HEK293 (cell line): ENCODE measurements at regions of chr6 and their contacts with region 1.

Region 1: GRCh38 chr6:36027501-36028087 is at the start of gene MAPK14:
- H3K4me3 ChIP-seq: peak within 1 kb of the TSS; percentile 78
- H3K27ac ChIP-seq: peak within 1 kb of the TSS; percentile 90
- H3K4me1 ChIP-seq: peaks cover 3% of the 10 kb centered on the region; the same call in 1 of the 2 replicates
- CTCF ChIP-seq: peak; percentile 96; the same call in 1 of the 2 replicates

Region 2: DNA sequence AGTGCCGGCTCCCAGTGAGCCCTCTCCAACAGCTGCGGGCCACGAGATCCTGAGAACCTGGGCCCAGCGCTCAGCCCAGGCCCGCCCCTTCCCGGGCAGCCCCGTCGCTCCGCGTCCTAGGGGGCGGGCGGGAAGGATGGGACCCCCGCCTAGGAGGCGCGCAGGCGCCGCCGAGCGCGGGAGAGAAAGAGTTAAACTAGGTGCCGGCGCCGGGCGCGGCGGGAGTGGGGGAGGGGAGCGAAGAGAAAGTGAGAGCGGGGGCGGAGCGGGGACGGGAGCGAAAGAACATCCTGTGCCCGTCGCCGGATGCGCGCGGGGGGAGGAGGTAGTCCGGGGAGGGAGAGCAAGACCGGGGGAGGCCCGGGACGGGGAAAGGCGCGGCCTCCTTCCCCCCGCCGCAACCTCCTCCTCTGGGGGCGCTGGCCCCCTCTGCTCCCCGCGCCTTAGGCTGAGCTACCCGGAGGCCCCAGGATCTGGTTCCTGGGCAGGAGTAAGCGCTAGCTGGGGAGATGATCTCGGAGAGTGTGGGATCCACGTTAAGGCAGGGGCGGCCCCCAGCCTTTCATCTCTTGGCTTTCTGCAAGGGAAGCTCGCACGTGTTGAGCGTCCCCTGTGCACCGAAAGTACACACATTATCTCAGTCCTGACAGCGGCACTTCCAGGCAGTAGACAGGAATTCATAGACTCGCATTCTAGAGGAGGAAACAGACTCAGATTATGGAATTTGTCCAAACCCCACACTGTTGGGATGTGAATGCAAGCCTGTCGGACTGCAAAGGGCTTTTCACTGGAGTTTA is 295.7 kb before region 1 on chr6:
- CTCF ChIA-PET with region 1: no interaction called
- POLR2A ChIA-PET with region 1: no interaction called
- H3K4me3 ChIP-seq: peak overlapping the region; percentile 68
- H3K27ac ChIP-seq: peak overlapping the region; percentile 79
- H3K4me1 ChIP-seq: peaks cover 13% of the 10 kb centered on the region
- CTCF ChIP-seq: peak; percentile 88

Region 3: GRCh38 chr6:35757456-35758123 is 270.0 kb before region 1 on chr6:
- CTCF ChIA-PET with region 1: no interaction called
- POLR2A ChIA-PET with region 1: no interaction called
- H3K4me3 ChIP-seq: no peak overlapping the region
- H3K27ac ChIP-seq: no peak overlapping the region
- H3K4me1 ChIP-seq: no peaks in the 10 kb centered on the region
- CTCF ChIP-seq: 0 out of 2 replicates have a peak, but pooled peaks have one; percentile 11

Region 4: GRCh38 chr6:35833536-35833935 is 194.1 kb before region 1 on chr6:
- CTCF ChIA-PET with region 1: no interaction called
- POLR2A ChIA-PET with region 1: no interaction called
- H3K4me3 ChIP-seq: no peak overlapping the region
- H3K27ac ChIP-seq: no peak overlapping the region
- H3K4me1 ChIP-seq: no peaks in the 10 kb centered on the region
- CTCF ChIP-seq: no peak

Region 5: GRCh38 chr6:36052097-36052496 is 24.5 kb after region 1 on chr6:
- CTCF ChIA-PET with region 1: interaction called, 14 read pairs
- POLR2A ChIA-PET with region 1: interaction called, 8 read pairs
- H3K4me3 ChIP-seq: no peak overlapping the region
- H3K27ac ChIP-seq: no peak overlapping the region
- H3K4me1 ChIP-seq: peaks cover 12% of the 10 kb centered on the region; the same call in 1 of the 2 replicates
- CTCF ChIP-seq: no peak

Region 6: DNA sequence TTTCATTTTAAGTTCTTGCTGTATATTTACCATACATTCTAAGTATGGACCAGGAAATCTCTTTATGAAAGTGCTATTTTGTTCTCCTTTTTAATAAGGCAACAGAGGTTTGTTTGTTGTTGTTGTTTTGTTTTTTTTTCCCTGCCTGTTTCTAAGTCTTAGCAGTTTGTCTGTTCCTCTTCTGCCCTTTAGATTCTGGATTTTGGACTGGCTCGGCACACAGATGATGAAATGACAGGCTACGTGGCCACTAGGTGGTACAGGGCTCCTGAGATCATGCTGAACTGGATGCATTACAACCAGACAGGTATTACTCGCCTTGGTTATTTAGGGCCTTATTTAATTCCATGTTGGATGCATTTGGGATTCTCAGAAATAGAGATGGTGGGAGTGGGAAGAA is 48.1 kb after region 1 on chr6:
- CTCF ChIA-PET with region 1: interaction called, 8 read pairs
- POLR2A ChIA-PET with region 1: interaction called, 11 read pairs
- H3K4me3 ChIP-seq: no peak overlapping the region
- H3K27ac ChIP-seq: no peak overlapping the region
- H3K4me1 ChIP-seq: peaks cover 5% of the 10 kb centered on the region; the same call in 1 of the 2 replicates
- CTCF ChIP-seq: no peak

Region 7: DNA sequence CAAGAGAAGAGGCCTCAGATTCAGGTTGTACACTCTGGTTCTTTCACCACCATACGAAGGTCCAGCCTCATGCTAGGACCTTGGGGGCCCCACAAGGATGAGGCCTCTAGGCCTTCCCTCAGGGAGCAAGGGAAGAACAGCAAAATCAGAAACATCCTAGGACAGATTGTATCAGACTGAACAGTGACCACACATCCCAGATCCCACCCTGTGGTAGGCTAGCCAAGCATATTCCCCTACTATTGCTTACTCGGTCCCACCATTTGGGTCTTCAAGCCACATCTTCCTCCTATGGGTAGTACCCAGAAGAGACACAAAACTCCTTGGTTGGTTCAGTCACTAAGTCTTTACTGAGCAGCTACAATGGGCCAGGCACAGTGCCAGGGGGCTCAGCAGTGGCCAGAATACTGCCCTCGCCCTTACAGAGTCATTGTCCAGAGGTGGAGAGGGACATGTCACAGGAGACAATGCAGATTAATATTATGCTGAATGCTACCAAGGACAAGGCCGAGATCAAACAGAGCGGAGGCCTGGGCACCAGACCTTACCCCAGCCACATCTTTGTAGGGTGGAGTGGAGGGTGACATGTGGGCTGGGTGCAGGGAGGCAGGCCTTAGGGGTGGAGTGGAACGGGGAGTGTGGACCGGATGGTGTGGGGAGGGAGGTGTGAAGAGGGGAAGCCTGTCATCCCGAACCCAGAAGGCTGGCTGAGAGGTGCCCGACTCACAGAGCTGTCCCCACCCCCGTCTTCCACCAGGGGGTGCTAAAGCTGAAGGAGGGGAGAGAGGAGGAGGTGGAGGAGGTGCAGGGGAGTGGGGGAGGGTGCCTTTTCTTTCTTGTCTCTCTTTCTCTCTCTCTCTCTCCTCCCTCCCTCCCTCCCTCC is 95.9 kb after region 1 on chr6:
- CTCF ChIA-PET with region 1: interaction called, 7 read pairs
- POLR2A ChIA-PET with region 1: interaction called, 10 read pairs
- H3K4me3 ChIP-seq: no peak overlapping the region
- H3K27ac ChIP-seq: no peak overlapping the region
- H3K4me1 ChIP-seq: no peaks in the 10 kb centered on the region
- CTCF ChIP-seq: peak; percentile 73